Vagina (tissue), 2 donors: ENCODE measurements at regions of chr9 and their contacts with region 1.

Region 1: DNA sequence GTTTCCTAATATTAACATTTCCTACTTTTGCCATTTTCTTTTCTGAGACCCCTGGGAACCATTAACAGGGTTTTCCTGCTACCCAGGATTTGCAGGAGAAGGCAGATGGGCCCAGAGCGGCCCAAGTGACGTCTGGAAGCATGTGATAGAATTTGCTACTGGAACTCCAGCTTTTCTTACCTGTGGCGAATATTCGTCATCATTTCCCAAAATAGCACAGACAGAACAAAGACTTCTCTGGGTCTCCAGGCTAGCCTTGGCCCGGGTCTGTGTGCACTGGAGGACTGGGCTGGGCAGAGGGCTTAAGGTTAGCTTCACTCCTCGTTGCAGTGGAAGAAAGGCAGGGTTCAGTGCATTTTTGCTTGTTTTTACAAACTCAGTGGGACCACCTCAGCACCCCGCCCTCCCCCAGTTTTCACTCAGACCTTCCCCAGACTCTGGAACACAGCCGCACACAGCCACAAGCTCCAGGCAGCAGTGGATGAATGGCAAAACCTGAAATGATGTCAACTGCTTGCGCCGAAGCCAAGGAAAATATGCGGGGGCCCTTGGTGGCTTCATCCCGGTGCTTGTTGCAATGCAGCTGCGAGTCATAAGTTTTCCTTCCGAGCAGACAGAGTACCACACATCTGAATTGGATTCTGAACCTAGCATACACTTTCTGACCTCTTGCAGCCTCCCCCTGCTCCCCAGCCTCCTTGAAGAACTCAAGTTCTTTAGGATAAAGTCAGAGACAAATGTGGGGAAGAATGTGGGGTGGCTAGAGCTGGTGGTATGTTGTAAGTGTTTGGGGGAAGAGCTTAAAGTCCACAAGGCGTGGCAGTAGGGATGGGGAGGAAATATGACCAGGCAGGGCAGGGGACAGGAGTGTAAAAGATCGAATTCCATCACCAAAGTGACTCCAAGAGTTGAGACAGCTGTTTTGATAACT is 586.0 kb downstream of the CCDC171 start:
- DNase-seq: no peak
- H3K4me3 ChIP-seq: no peak overlapping the region
- H3K27ac ChIP-seq: peak overlapping the region; percentile 69
- H3K4me1 ChIP-seq: peaks cover 17% of the 10 kb centered on the region
- H3K27me3 ChIP-seq: no peaks in the 10 kb centered on the region
- CTCF ChIP-seq: no peak
- POLR2A ChIP-seq: no peak

Region 2: DNA sequence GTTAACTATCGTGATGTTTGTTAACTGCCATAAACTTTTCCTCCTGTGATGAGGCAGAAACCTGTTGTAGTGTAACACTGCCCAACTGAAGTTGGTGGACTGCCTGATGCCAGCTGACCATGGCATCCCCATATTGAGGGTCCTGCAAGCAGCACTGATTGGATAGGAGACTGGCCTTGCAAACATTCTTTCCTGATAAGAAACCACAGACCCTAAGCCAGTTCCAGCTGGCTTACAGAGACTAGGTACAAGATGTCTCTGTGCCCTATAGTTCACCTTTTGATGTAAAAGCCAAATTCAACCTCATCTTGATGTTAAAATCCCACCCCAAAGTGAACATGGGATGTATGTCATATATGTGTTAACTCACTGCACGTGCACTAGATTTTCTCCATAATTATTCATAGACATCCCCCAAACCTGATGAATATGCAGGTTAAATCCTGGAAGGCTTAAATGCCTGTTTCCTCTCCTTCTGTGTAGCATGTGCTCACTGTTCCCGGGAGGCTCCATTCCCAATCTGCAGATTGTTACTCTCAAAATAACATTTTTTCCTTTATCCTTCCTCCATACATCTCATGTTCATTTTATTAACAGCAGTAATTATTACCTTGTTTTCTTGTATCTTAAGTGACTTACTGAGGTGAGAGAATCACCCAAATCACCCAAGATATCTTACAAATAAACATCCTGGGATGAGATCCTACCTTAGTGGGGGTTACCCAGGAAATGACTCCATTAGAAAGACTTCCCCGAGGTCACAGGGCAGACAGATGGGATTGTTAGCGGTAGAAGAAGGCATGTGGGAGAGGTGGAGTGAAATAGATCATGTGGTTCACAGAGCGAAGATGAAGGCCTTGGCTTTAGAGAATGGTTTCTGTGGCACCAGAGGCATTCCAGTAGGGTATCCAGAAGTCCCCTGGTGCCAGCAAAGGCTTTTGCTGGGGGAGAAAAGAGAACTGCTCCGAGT is 19.3 kb before region 1 on chr9:
- intact Hi-C with region 1: no loop called
- DNase-seq: no peak
- H3K4me3 ChIP-seq: no peak overlapping the region
- H3K27ac ChIP-seq: no peak overlapping the region
- H3K4me1 ChIP-seq: no peaks in the 10 kb centered on the region
- H3K27me3 ChIP-seq: no peaks in the 10 kb centered on the region
- CTCF ChIP-seq: no peak
- POLR2A ChIP-seq: no peak

Region 3: GRCh38 chr9:16154521-16155078 is 15.8 kb after region 1 on chr9:
- intact Hi-C with region 1: loop called (anchors 1 kb)
- DNase-seq: peak in 1 of 2 donors; percentile 74
- H3K4me3 ChIP-seq: peak overlapping the region in 1 of 2 donors; percentile 10
- H3K27ac ChIP-seq: no peak overlapping the region
- H3K4me1 ChIP-seq: peaks cover 3% of the 10 kb centered on the region
- H3K27me3 ChIP-seq: no peaks in the 10 kb centered on the region
- CTCF ChIP-seq: no peak
- POLR2A ChIP-seq: no peak